Activated naive CD4-positive, alpha-beta T cell treated with anti-CD3 and anti-CD28 coated beads for 36 hours (primary cell): ENCODE measurements at regions of chr11 and their contacts with region 1.

Region 1: DNA sequence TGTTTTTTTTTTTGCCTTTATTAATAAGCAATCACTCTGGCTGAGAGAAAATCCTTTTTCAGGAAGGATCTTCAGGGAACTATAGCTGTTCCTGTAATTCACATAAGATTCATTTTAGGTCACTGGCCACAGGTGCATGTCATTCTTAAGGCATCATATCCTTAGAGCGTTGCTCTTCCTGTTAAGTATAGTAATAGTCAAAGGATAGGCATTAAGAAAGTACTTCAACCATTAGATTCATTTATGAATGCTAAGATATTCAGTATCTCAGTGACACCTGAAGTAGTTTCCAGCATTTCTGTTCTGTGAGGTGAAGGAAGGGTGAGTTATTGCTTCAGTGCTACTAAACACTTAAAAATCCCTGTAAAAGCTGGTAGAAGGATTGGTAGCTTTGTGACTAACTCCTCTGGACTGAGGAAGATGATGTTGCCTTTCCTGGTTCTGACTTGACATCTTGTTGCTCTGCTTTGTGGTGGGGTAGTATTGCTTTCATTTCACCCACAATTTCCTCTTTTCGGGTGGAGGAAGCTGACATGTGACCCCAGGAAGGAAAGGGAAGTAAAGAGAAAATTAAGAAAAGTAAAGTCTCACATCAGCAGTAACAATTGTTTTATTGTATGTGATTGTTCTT is 34.7 kb downstream of the RNF169 start:
- DNase-seq: peak; percentile 18
- H3K4me3 Mint-ChIP-seq: no peak overlapping the region
- H3K27ac Mint-ChIP-seq: no peak overlapping the region
- H3K4me1 Mint-ChIP-seq: peaks cover 24% of the 10 kb centered on the region
- H3K27me3 Mint-ChIP-seq: no peaks in the 10 kb centered on the region

Region 2: GRCh38 chr11:74427385-74427886 is 355.9 kb before region 1 on chr11:
- CTCF ChIA-PET with region 1: no interaction called
- intact Hi-C with region 1: no loop called
- DNase-seq: no peak
- H3K4me3 Mint-ChIP-seq: no peak overlapping the region
- H3K27ac Mint-ChIP-seq: no peak overlapping the region
- H3K4me1 Mint-ChIP-seq: no peaks in the 10 kb centered on the region
- H3K27me3 Mint-ChIP-seq: no peaks in the 10 kb centered on the region

Region 3: DNA sequence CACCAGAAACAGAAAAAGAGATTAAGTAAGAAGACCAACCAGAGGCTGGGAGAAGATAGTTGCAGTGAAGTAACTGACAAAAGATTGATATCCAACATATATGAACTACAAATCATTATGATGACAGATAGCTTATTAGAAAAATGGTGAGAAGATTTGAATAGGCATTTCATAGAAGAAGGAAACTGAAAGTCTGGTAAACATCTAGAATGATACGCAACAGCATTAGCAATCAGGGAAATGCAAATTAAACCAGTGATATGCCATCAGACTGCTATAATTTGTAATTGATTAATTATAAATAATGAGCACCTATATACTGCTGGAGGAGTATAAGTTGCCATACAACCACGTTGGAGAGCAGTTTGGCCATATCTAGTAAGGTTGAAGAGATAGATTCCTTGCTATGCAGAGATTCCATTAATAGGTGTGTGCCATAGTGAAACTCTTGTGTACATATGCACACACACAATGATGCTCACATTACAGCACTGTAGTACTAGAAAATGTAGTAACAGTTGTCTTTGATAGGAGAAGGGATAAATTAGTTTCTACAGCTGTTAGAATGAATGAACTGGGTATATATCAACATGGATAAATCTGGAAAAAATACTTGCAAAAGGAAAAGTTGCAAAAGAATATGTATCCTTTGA is 14.2 kb before region 1 on chr11:
- CTCF ChIA-PET with region 1: interaction called, 4 read pairs
- intact Hi-C with region 1: loop called (anchors 2 kb)
- DNase-seq: no peak
- H3K4me3 Mint-ChIP-seq: no peak overlapping the region
- H3K27ac Mint-ChIP-seq: no peak overlapping the region
- H3K4me1 Mint-ChIP-seq: peaks cover 25% of the 10 kb centered on the region
- H3K27me3 Mint-ChIP-seq: no peaks in the 10 kb centered on the region